Mammary epithelial cell (primary cell): ENCODE measurements at regions of chr15 and their contacts with region 1.

Region 1: DNA sequence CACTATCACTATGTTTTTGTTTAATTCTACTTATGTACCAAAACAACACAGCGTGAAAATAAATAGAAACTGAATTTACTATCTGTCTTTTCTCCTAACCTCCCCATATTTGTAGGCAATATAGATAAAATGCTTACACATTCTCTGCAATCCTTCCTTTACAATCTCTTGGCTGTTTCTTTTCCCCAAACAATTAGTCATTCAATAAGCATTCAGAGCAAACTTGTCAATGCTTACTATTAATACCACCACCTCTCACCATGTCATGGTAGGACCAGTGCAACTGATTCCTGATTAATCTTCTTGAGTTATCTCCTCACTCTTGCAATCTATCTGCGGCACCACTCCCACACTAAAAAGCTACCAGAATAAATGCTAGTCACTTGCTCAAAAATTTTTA is 74.0 kb upstream of the TTBK2 start:
- DNase-seq: peak; percentile 23
- H3K4me3 ChIP-seq: no peak overlapping the region
- H3K27ac ChIP-seq: no peak overlapping the region
- H3K4me1 ChIP-seq: peaks cover 3% of the 10 kb centered on the region
- H3K27me3 ChIP-seq: no peaks in the 10 kb centered on the region
- CTCF ChIP-seq: no peak

Region 2: DNA sequence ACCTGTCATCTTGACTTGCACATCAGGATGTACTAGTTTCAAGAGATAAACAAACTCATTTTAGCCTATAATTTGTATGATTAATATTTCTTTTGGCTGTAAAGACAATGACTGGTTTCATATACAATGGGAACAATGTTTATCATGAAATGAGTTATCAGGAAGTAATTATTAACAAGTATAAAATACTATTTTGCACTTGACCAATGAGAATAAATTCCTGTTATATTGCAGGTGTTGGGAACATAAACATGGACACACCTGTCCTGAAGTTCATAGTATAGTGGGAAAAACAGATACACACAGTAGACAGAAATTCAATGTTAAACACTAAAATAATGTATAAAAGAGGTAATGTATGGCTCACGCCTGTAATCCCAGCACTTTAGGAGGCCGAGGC is 54.4 kb after region 1 on chr15:
- CTCF ChIA-PET with region 1: no interaction called
- dilution Hi-C with region 1: no loop called
- in situ Hi-C with region 1: no loop called
- intact Hi-C with region 1: no loop called
- DNase-seq: no peak
- H3K4me3 ChIP-seq: no peak overlapping the region
- H3K27ac ChIP-seq: no peak overlapping the region
- H3K4me1 ChIP-seq: no peaks in the 10 kb centered on the region
- H3K27me3 ChIP-seq: no peaks in the 10 kb centered on the region
- CTCF ChIP-seq: no peak

Region 3: GRCh38 chr15:43067717-43068461 is 73.3 kb after region 1 on chr15:
- CTCF ChIA-PET with region 1: no interaction called
- dilution Hi-C with region 1: loop called (anchors 5 kb)
- in situ Hi-C with region 1: no loop called
- intact Hi-C with region 1: no loop called
- DNase-seq: peak; percentile 90
- H3K4me3 ChIP-seq: no peak overlapping the region
- H3K27ac ChIP-seq: peak overlapping the region; percentile 42
- H3K4me1 ChIP-seq: no peaks in the 10 kb centered on the region
- H3K27me3 ChIP-seq: no peaks in the 10 kb centered on the region
- CTCF ChIP-seq: no peak

Region 4: DNA sequence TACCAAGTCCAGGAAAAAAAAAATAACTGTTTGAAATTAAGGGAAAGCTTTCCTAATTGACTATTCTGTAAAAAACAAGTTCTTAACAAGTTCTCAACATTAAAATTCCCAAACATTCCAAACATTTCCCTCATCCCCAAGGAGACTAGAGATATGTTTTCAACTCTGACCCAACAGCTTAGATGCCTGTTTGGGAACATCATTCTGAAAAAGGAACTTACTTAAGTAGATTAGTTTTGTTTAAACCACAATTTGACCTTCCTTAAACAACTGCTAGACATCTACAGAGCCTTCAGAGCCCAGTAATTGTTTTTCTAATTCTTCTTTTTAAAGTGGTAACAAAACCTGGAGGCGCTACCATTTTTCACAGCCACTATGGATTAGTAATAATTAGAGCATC is 98.5 kb after region 1 on chr15:
- CTCF ChIA-PET with region 1: interaction called, 18 read pairs
- dilution Hi-C with region 1: no loop called
- in situ Hi-C with region 1: no loop called
- intact Hi-C with region 1: no loop called
- DNase-seq: no peak
- H3K4me3 ChIP-seq: no peak overlapping the region
- H3K27ac ChIP-seq: no peak overlapping the region
- H3K4me1 ChIP-seq: peaks cover 14% of the 10 kb centered on the region
- H3K27me3 ChIP-seq: no peaks in the 10 kb centered on the region
- CTCF ChIP-seq: no peak